PC-3 (cell line): ENCODE measurements at regions of chr15 and their contacts with region 1.

Region 1: DNA sequence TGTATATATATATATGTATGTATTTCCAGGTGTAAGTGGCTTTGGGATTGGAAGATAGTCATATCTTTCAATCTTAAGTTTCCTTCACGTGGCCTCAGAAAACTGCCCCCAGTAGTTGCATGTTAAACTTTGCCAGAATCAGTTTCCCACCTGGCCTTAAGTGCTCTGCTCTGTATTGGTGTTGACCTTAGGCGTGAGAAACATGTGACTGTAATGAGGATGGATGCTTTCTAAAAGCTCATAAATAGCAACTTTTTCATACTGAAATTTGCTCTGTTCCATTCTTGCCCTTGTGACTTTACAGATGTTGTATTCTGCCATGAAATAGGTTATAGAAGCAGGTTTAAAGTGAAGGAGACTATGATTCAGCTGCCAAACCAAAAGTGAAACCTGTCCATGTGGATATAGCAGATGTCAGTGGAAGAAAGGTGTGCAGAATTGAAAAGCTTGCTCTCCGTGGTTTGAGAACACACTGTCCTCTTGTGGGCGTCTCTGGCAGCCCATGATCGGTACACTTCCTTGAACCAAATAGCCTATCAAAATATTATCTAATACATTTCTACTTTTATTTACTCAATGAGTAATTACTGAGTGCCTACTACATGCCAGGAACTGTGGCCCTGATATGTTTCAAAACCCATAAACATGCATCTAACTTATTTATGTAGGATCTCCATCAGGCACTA is 15.8 kb downstream of the SCG5 start:
- DNase-seq: peak; percentile 58
- ATAC-seq: peak; percentile 19
- H3K4me3 ChIP-seq: no peak overlapping the region
- H3K27ac ChIP-seq: peak overlapping the region; percentile 90
- H3K4me1 ChIP-seq: peaks cover 58% of the 10 kb centered on the region
- H3K27me3 ChIP-seq: no peaks in the 10 kb centered on the region
- CTCF ChIP-seq: peak; percentile 53

Region 2: DNA sequence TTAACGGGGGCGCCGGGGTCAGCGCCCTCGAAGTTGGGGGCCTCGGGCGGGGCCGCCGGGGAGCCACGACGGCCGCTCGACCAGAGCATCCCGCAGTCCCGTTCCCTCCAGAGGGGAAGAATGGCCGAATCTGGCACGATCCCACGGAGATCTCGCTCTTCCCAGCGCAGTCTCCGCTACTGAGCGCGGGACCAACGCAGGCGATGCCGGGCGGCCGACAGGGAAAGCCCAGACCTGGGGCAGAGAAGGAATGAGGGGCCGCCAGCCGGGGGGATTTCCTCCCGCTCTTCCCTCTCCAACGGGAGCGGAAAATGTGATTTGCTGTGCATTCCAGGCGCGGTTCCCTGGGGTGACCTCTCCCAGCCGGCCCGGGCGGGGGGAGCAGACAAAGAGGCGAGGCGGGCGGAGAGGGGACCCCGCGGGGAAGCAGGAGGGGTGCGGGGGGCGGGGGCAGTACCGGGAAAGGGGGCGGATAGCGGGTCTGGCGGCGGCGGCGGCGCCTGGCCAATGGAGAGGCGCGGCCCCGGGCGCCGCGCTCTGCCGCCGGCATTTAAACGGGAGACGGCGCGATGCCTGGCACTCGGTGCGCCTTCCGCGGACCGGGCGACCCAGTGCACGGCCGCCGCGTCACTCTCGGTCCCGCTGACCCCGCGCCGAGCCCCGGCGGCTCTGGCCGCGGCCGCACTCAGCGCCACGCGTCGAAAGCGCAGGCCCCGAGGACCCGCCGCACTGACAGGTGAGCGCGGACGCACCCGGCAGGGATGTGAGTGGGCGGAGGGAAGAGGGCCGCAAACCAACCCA is 60.3 kb after region 1 on chr15 and contains the start of gene GREM1:
- CTCF ChIA-PET with region 1: no interaction called
- POLR2A ChIA-PET with region 1: no interaction called
- intact Hi-C with region 1: no loop called
- DNase-seq: no peak
- ATAC-seq: no peak
- H3K4me3 ChIP-seq: peak within 1 kb of the TSS; percentile 64
- H3K27ac ChIP-seq: no peak within 1 kb of the TSS
- H3K4me1 ChIP-seq: peaks cover 15% of the 10 kb centered on the region
- H3K27me3 ChIP-seq: no peaks in the 10 kb centered on the region
- CTCF ChIP-seq: no peak
- total RNA-seq, gene GREM1: 0.58 and 1.6 TPM in 2 replicates

Region 3: GRCh38 chr15:32774022-32774421 is 116.7 kb after region 1 on chr15:
- CTCF ChIA-PET with region 1: no interaction called
- POLR2A ChIA-PET with region 1: no interaction called
- intact Hi-C with region 1: loop called (anchors 2 kb)
- DNase-seq: peak; percentile 98
- ATAC-seq: peak; percentile 98
- H3K4me3 ChIP-seq: no peak overlapping the region
- H3K27ac ChIP-seq: peak overlapping the region; percentile 96
- H3K4me1 ChIP-seq: peaks cover 33% of the 10 kb centered on the region
- H3K27me3 ChIP-seq: no peaks in the 10 kb centered on the region
- CTCF ChIP-seq: no peak

Region 4: DNA sequence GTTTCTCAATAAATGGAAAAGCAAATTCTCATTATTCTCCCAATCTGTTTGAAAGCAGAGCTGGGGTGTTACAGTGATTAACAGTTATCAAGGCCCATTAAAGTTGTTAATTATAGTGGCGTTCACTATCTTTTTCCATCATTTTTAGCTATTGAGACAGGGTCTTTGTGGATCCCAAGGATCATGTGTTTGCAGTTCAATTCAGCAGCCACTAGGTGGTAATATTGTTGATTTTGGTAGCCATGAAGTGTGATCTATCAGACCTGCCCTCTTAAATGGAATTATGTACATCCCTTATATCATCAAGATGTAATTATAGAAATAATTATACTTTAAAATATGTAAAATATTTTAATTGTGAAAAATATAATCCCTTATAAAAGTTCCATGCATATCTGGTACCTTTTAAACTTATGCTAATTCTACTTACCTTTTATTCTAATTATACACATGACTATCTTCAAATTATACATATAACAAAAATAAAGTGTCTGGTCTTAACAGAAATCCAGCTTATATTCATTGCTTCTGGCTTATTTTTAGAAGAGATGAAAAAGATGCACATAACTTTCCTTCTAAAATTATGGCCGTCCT is 186.9 kb after region 1 on chr15:
- CTCF ChIA-PET with region 1: interaction called, 11 read pairs
- POLR2A ChIA-PET with region 1: interaction called, 5 read pairs
- intact Hi-C with region 1: loop called (anchors 1 kb)
- DNase-seq: peak; percentile 69
- ATAC-seq: peak; percentile 60; the same call in 1 of the 2 replicates
- H3K4me3 ChIP-seq: no peak overlapping the region
- H3K27ac ChIP-seq: peak overlapping the region; percentile 37; the same call in 1 of the 2 replicates
- H3K4me1 ChIP-seq: peaks cover 32% of the 10 kb centered on the region
- H3K27me3 ChIP-seq: no peaks in the 10 kb centered on the region
- CTCF ChIP-seq: peak; percentile 73

Region 5: DNA sequence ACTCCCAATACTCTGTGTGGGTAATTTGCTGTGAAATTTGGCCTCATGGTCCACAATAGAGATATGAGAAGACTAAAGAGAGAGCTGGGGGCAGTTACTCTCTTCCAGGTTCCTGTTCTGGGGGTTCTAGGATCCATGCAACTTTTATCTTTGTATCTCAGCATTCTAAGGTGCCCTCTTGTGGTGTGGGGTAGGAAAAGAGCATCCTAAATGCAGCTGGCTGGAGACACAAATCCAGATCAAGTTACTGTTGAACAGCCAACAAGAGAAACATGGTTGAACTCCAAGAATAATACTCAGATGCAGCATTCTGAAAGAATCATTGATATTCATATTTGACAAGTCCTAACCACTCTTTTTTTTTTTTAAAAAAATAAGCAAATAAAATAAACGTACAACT is 298.7 kb after region 1 on chr15:
- CTCF ChIA-PET with region 1: interaction called, 5 read pairs
- POLR2A ChIA-PET with region 1: no interaction called
- intact Hi-C with region 1: loop called (anchors 1 kb)
- DNase-seq: peak; percentile 75
- ATAC-seq: peak; percentile 86
- H3K4me3 ChIP-seq: no peak overlapping the region
- H3K27ac ChIP-seq: 0 out of 2 replicates have a peak overlapping the region, but pooled peaks have one; percentile 1
- H3K4me1 ChIP-seq: peaks cover 17% of the 10 kb centered on the region
- H3K27me3 ChIP-seq: no peaks in the 10 kb centered on the region
- CTCF ChIP-seq: peak; percentile 89

Region 6: GRCh38 chr15:33067941-33068481 is 410.7 kb after region 1 on chr15:
- CTCF ChIA-PET with region 1: no interaction called
- POLR2A ChIA-PET with region 1: interaction called, 7 read pairs
- intact Hi-C with region 1: loop called (anchors 2 kb)
- DNase-seq: peak; percentile 71
- ATAC-seq: peak; percentile 68
- H3K4me3 ChIP-seq: peak overlapping the region; percentile 43
- H3K27ac ChIP-seq: peak overlapping the region; percentile 95
- H3K4me1 ChIP-seq: peaks cover 48% of the 10 kb centered on the region
- H3K27me3 ChIP-seq: no peaks in the 10 kb centered on the region
- CTCF ChIP-seq: no peak